ENCODE measurements at regions of chr6 and their contacts with region 1.

Region 1: DNA sequence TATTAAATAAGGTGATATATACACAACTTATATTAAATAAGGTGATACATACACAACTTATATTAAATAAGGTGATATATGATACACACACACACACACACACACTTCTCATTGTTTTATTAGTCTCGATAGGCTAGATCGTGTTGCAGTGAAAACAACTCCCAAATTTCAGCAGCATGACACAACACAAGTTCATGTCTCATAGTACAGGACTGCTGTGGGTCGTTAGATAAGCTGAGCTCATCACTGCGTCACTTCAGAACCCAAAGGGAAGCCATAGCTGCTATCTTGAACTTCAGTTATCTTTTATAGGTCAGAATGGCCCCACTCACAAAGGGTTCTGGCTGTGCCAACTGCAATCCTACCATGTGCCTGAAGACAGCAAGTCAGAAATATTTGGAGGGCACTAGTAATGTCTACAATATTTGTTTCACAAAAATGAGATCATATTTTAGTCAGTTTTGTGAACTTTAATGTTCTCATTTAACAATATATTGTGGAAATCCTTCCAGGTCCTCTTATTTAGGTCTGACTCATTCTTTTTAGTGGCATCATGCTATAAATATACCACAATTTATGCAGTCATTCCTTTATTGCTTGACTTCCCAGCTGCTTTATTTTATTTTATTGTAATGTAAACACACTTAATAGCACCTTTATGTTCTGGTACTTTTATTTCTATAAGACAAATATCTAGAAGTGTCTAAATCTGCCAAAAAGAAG is 290.2 kb downstream of the PHACTR1 start:
- DNase-seq: no peak
- ATAC-seq: no peak
- H3K4me3 ChIP-seq: no peak overlapping the region
- H3K27ac ChIP-seq: no peak overlapping the region
- H3K4me1 ChIP-seq: peaks cover 0 to 6% of the 10 kb centered on the region in 2 donors
- H3K27me3 ChIP-seq: no peaks in the 10 kb centered on the region

Region 2: GRCh38 chr6:12962987-12963386 is 43.8 kb before region 1 on chr6:
- intact Hi-C with region 1: loop called in 1 of 2 experiments (anchors 5 kb)
- DNase-seq: no peak
- ATAC-seq: no peak
- H3K4me3 ChIP-seq: no peak overlapping the region
- H3K27ac ChIP-seq: peak overlapping the region; percentile 38 to 87
- H3K4me1 ChIP-seq: peaks cover 2 to 11% of the 10 kb centered on the region in 2 donors
- H3K27me3 ChIP-seq: no peaks in the 10 kb centered on the region